ENCODE measurements at regions of chr19 and their contacts with region 1.

Region 1: DNA sequence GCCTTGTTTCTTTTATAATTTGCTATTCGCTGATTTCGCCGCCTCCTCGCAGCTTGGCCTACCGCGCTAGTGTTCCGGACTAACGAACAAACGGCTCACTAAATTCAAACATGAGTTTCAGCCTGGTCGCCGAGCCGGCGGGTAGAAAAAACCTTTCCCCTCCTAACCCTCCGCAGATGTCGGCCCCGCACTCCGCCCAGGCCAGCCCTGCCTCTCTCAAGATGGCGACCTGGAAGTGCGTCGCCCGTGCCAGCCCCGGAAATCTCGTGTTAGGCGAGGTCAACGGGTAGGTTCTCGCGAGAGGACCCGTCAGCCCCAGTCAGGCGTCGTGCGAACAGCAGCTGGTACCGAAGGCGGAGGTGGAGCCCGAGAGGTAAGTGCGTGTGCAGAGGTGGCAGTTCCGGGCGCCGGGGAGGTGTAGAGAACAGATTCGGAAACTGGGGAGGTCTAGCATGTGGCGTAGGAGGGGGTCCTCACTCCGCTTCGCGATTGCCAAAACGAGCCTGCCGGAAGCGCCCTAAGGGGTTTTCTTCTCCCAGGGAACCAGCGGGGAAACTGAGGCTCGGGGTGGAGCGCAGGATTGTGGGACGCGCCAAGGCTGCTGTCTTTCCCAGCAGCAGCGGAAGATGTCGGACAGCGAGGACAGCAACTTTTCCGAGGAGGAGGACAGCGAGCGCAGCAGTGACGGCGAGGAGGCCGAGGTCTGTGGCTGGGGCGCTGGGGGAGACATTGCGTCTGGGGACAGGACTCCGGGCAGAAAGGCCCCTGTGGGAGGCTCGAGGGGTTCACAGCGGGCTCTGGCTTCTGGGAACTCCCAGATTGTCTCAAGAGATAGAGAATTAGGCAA is at the start of gene SUPT5H:
- DNase-seq: peak; percentile 98 to 99
- H3K4me3 ChIP-seq: peak within 1 kb of the TSS; percentile 92
- H3K4me3 Mint-ChIP-seq: peak within 1 kb of the TSS; percentile 95
- H3K27ac Mint-ChIP-seq: peak within 1 kb of the TSS; percentile 98
- H3K4me1 ChIP-seq: peaks cover 8% of the 10 kb centered on the region
- H3K4me1 Mint-ChIP-seq: peaks cover 17% of the 10 kb centered on the region
- H3K27me3 ChIP-seq: no peaks in the 10 kb centered on the region
- H3K27me3 Mint-ChIP-seq: no peaks in the 10 kb centered on the region
- CTCF ChIP-seq: no peak
- total RNA-seq, gene SUPT5H: 171 and 188 TPM in 2 replicates

Region 2: DNA sequence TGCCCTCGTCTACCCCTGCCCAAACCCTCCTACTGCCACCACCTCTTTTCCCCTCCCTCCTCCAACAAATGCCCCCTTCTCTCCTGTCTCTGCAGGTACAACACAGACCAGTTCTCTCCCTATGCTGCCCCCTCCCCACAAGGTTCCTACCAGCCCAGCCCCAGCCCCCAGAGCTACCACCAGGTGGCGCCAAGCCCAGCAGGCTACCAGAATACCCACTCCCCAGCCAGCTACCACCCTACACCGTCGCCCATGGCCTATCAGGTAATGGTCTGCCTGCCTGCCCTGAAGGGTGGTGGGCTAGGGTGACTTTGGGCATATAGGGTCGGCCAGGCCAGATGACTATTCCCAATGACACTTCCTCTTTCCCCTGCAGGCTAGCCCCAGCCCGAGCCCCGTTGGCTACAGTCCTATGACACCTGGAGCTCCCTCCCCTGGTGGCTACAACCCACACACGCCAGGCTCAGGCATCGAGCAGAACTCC is 28.7 kb after region 1 on chr19:
- CTCF ChIA-PET with region 1: interaction called, 10 read pairs
- POLR2A ChIA-PET with region 1: no interaction called
- intact Hi-C with region 1: no loop called
- DNase-seq: peak; percentile 73 to 88
- H3K4me3 ChIP-seq: no peak overlapping the region
- H3K4me3 Mint-ChIP-seq: no peak overlapping the region
- H3K27ac Mint-ChIP-seq: no peak overlapping the region
- H3K4me1 ChIP-seq: no peaks in the 10 kb centered on the region
- H3K4me1 Mint-ChIP-seq: no peaks in the 10 kb centered on the region
- H3K27me3 ChIP-seq: no peaks in the 10 kb centered on the region
- H3K27me3 Mint-ChIP-seq: no peaks in the 10 kb centered on the region
- CTCF ChIP-seq: peak; percentile 94 to 98

Region 3: DNA sequence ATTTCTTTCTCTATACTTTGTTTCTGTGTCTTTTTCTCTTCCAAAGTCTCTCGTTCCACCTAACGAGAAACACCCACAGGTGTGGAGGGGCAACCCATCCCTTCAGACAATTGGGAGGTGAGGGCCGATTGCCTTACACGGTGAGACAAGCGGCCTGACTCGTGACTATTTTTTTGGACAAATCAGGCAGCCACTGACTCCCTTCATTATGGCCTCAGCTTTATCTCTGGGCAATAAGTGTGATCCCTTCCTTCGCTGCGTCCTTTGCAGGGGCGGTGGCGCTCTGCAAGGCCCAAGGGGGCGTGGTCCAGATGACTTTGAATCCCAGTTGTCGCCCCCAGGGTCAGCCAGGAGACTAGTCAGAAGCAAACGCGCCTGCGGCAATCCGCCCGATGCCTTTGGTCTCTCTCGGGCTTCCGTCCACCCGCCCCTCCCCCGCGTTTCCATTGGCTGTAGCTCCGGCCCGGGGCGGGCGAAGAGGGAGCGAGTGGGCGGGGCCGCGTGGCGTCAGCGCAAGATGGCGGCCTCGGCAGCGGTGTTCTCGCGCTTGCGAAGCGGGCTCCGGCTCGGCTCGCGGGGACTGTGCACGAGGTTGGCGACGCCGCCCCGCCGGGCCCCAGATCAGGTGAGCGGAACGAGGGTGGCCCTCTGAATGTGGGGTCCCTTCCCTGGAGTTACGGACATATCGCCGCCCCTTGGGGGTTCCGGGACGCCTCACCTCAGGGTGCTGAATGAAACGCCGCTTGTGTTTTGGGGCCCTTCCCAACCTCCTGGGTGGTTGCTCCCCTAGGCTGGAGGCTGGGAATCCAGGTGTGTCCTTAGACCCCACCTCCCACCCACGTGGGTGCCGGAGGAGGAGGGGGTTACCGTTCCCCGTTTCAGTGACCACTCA is 35.1 kb after region 1 on chr19 and contains the start of gene TIMM50:
- CTCF ChIA-PET with region 1: interaction called, 5 read pairs
- POLR2A ChIA-PET with region 1: no interaction called
- intact Hi-C with region 1: loop called (anchors 2 kb)
- DNase-seq: peak; percentile 99 to 100
- H3K4me3 ChIP-seq: peak within 1 kb of the TSS; percentile 94
- H3K4me3 Mint-ChIP-seq: peak within 1 kb of the TSS; percentile 92
- H3K27ac Mint-ChIP-seq: peak within 1 kb of the TSS; percentile 81
- H3K4me1 ChIP-seq: 0 out of 2 replicates have a peak, but pooled peaks cover 5% of the 10 kb centered on the region
- H3K4me1 Mint-ChIP-seq: peaks cover 17% of the 10 kb centered on the region
- H3K27me3 ChIP-seq: no peaks in the 10 kb centered on the region
- H3K27me3 Mint-ChIP-seq: no peaks in the 10 kb centered on the region
- CTCF ChIP-seq: peak in 1 of 2 experiments; percentile 8
- total RNA-seq, gene TIMM50: 152 and 162 TPM in 2 replicates

Region 4: DNA sequence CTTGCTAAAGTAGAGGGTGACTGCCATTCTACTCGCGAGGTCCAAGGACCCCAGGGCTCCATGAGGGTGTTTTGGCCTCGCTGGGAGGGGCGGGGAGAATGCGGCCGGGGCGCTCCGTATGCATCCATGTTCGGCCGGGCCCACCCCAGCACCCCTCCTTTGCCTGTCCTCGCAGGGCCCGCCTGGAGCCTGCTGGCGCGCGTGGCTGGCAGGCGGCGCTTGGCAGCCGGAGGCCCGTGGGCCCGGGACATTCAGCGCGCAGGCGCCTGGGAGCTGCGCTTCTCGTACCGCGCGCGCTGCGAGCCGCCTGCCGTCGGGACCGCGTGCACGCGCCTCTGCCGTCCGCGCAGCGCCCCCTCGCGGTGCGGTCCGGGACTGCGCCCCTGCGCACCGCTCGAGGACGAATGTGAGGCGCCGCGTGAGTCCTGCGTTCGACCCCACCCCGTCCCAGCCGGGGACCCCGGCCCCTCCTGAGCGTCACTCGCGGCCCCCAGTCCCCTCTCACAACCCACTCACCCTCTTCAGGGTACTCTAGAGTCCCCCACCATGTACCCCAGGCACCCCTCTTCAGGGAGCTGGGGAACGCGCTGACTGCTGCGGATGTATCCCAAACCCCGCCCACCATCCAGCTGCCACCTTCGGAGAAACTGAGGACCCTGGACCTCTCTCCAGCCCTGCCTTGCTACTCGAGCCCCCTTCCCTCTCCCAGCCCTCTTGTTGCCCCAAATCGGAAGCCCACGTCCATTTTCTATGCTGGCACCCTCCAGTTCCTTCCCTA is 57.3 kb after region 1 on chr19:
- CTCF ChIA-PET with region 1: interaction called, 20 read pairs
- POLR2A ChIA-PET with region 1: interaction called, 5 read pairs
- intact Hi-C with region 1: loop called (anchors 2 kb)
- DNase-seq: peak; percentile 67 to 90
- H3K4me3 ChIP-seq: peak overlapping the region; percentile 29
- H3K4me3 Mint-ChIP-seq: peak overlapping the region; percentile 64
- H3K27ac Mint-ChIP-seq: no peak overlapping the region
- H3K4me1 ChIP-seq: peaks cover 15% of the 10 kb centered on the region
- H3K4me1 Mint-ChIP-seq: peaks cover 16% of the 10 kb centered on the region
- H3K27me3 ChIP-seq: peaks cover 1% of the 10 kb centered on the region
- H3K27me3 Mint-ChIP-seq: peaks cover 31% of the 10 kb centered on the region
- CTCF ChIP-seq: peak; percentile 79 to 99

Region 5: GRCh38 chr19:39532233-39533002 is 86.9 kb after region 1 on chr19 and contains the start of gene EID2B:
- CTCF ChIA-PET with region 1: interaction called, 6 read pairs
- POLR2A ChIA-PET with region 1: no interaction called
- intact Hi-C with region 1: loop called (anchors 1 kb)
- DNase-seq: peak; percentile 93 to 95
- H3K4me3 ChIP-seq: peak within 1 kb of the TSS; percentile 72
- H3K4me3 Mint-ChIP-seq: peak within 1 kb of the TSS; percentile 77
- H3K27ac Mint-ChIP-seq: no peak within 1 kb of the TSS
- H3K4me1 ChIP-seq: no peaks in the 10 kb centered on the region
- H3K4me1 Mint-ChIP-seq: no peaks in the 10 kb centered on the region
- H3K27me3 ChIP-seq: no peaks in the 10 kb centered on the region
- H3K27me3 Mint-ChIP-seq: no peaks in the 10 kb centered on the region
- CTCF ChIP-seq: peak; percentile 96 to 98
- total RNA-seq, gene EID2B: 2.1 and 2.8 TPM in 2 replicates

Region 6: DNA sequence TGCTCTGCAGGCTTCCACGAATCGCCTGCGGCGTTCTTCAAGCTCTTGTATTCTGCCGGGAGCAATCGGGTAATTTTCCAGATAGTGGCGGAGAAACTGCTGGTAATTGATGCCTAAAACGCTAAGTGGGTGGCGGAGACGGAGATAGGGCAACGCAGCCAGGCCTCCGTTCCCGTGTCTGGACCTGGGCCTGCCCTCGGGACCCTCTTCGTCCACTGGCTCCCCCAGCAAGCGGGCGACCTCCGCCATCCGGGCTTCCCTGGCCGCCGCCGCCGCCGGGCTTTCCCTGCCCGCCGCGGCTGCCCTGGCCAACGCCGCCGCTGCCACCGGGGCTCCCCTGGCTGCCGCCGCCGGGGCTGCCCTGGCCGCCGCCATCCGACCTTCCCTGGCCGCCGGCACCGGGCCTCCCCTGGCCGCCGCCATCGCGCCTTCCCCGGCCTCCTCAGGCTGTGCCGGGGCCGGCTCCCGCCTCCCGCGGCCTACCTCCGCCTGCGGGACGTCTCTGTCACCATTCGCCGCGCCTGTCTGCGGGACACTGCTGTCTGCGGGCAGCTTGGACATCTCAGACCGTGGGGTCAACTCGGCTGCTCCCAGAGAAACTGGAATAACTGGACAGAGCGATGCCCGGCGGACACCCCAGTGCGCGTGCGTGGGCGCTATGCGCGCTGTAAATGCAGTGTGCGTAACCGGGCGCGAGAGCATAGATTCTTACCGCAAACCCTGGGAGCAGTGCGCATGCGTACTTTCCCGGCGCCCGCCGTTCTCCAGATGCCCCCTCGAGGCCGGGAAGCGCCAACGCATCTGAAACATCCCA is 94.2 kb after region 1 on chr19 and contains the start of gene EID2:
- CTCF ChIA-PET with region 1: interaction called, 10 read pairs
- POLR2A ChIA-PET with region 1: no interaction called
- intact Hi-C with region 1: loop called (anchors 2 kb)
- DNase-seq: peak; percentile 95 to 97
- H3K4me3 ChIP-seq: peak within 1 kb of the TSS; percentile 82
- H3K4me3 Mint-ChIP-seq: peak within 1 kb of the TSS; percentile 90
- H3K27ac Mint-ChIP-seq: peak within 1 kb of the TSS; percentile 93
- H3K4me1 ChIP-seq: peaks cover 8% of the 10 kb centered on the region; the same call in 1 of the 2 replicates
- H3K4me1 Mint-ChIP-seq: peaks cover 15% of the 10 kb centered on the region
- H3K27me3 ChIP-seq: no peaks in the 10 kb centered on the region
- H3K27me3 Mint-ChIP-seq: peaks cover 4% of the 10 kb centered on the region
- CTCF ChIP-seq: peak; percentile 89
- total RNA-seq, gene EID2: 21.7 and 26.3 TPM in 2 replicates

Measured in Caco-2 (cell line).